ENCODE measurements at regions of chr2 and their contacts with region 1.

Region 1: GRCh38 chr2:85888684-85889626 is at the start of gene ST3GAL5:
- DNase-seq: peak; percentile 64
- ATAC-seq: peak; percentile 91
- H3K4me3 ChIP-seq: peak within 1 kb of the TSS; percentile 64 to 86
- H3K27ac ChIP-seq: peak within 1 kb of the TSS; percentile 65
- H3K4me1 ChIP-seq: peaks cover 19% of the 10 kb centered on the region
- H3K27me3 ChIP-seq: 0 out of 2 replicates have a peak, but pooled peaks cover 3% of the 10 kb centered on the region
- CTCF ChIP-seq: peak; percentile 95
- total RNA-seq, gene ST3GAL5: 5.0 TPM

Region 2: DNA sequence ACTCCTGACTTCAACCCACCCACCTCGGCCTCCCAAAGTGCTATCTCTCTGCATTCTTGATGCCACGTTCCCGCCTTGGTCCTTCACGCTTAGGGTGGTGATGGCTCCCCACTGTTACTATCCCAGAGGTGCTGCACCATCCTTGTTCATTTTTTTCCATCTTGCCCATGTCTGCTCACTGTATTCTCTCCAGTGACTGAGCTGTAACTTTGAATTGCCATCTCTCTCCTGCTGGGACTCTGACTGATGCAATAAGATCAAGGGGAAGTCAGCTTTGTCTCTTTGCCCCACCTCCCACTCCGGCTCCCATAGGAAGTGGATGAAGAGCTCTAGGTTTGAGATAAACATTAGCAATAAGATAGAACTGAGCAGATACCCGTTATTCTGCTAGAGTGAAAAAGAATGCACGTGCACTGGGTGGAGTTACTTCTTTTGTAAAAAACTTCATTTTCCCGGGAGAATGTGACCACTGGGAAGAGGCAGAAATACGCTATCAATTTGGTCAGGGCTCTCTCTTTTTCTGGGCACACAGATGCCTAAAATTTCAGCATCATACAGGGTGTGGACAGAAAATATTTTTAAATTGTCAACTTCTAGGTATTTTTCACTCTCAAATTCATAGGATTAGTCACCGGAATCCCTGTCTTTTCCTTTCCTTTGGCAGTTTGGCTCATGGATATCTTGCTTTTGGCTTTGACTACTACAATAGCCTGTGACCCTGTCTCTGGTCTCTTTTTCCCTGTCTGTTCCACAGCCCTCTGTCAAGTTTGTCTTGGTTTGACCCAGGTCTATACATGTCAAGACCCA is 111.4 kb after region 1 on chr2:
- CTCF ChIA-PET with region 1: no interaction called
- POLR2A ChIA-PET with region 1: no interaction called
- in situ Hi-C with region 1: no loop called
- intact Hi-C with region 1: loop called (anchors 10 kb)
- DNase-seq: no peak
- ATAC-seq: no peak
- H3K4me3 ChIP-seq: no peak overlapping the region
- H3K27ac ChIP-seq: no peak overlapping the region
- H3K4me1 ChIP-seq: no peaks in the 10 kb centered on the region; the same call in 1 of the 2 replicates
- H3K27me3 ChIP-seq: no peaks in the 10 kb centered on the region
- CTCF ChIP-seq: no peak

Region 3: DNA sequence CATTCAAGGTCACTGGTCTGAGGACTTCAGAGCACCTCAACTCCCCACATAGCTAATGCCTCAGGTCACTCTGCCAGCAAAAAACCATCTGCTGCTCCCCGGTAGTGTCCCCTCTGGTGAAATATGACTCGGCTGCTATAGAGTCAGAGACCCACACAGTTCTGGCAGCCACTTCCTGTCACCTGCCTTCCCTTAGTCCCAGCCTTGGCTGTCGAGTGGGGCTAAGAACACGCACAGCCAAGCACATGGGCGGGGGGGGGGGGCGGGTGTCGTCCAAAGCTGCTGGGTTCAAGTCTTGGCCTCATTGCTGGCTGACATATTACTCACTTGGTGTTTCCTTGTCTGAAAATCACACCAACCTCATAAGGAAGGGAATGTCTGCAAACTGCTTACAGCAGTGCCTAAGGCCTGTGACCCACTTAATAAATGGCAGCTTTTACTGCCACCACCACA is 179.2 kb after region 1 on chr2:
- CTCF ChIA-PET with region 1: no interaction called
- POLR2A ChIA-PET with region 1: no interaction called
- in situ Hi-C with region 1: no loop called
- intact Hi-C with region 1: loop called (anchors 10 kb)
- DNase-seq: no peak
- ATAC-seq: 0 out of 2 replicates have a peak, but pooled peaks have one; percentile 49
- H3K4me3 ChIP-seq: no peak overlapping the region
- H3K27ac ChIP-seq: no peak overlapping the region
- H3K4me1 ChIP-seq: no peaks in the 10 kb centered on the region
- H3K27me3 ChIP-seq: no peaks in the 10 kb centered on the region
- CTCF ChIP-seq: no peak

Region 4: GRCh38 chr2:86195055-86195807 is 306.3 kb after region 1 on chr2 and contains the start of gene IMMT:
- CTCF ChIA-PET with region 1: no interaction called
- POLR2A ChIA-PET with region 1: no interaction called
- in situ Hi-C with region 1: no loop called
- intact Hi-C with region 1: loop called (anchors 5 kb)
- DNase-seq: peak; percentile 97
- ATAC-seq: peak; percentile 93
- H3K4me3 ChIP-seq: peak within 1 kb of the TSS; percentile 88 to 100
- H3K27ac ChIP-seq: peak within 1 kb of the TSS; percentile 99
- H3K4me1 ChIP-seq: peaks cover 10% of the 10 kb centered on the region
- H3K27me3 ChIP-seq: no peaks in the 10 kb centered on the region
- CTCF ChIP-seq: no peak
- total RNA-seq, gene IMMT: 138 TPM

Measured in Panc1 (cell line).